Activated naive CD4-positive, alpha-beta T cell treated with anti-CD3 and anti-CD28 coated beads for 36 hours (primary cell): ENCODE measurements at regions of chr1 and their contacts with region 1.

Region 1: DNA sequence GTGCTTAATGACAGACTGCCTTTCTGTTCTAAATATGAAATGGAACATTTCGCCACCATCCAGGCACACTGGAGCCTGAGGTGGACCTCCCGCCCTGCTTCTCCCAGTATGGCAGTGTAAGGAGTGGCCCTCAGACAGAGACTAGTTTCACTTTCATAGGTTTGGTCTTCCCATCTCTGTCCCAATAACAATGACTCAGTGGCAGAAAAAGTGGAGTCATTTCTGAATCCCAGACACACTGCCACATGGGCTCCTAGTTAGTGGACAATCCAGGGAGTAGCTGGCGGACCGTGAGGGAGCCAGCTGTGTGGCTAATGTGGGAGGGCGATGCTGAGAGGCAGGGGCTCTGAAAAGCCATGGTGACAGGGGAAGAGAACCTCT is 95.6 kb upstream of the TSPAN2 start:
- DNase-seq: no peak
- H3K4me3 Mint-ChIP-seq: no peak overlapping the region
- H3K27ac Mint-ChIP-seq: peak overlapping the region; percentile 22
- H3K4me1 Mint-ChIP-seq: peaks cover 6% of the 10 kb centered on the region
- H3K27me3 Mint-ChIP-seq: peaks cover 10% of the 10 kb centered on the region

Region 2: GRCh38 chr1:114524935-114525334 is 660.0 kb before region 1 on chr1:
- CTCF ChIA-PET with region 1: no interaction called
- intact Hi-C with region 1: no loop called
- DNase-seq: no peak
- H3K4me3 Mint-ChIP-seq: no peak overlapping the region
- H3K27ac Mint-ChIP-seq: no peak overlapping the region
- H3K4me1 Mint-ChIP-seq: no peaks in the 10 kb centered on the region
- H3K27me3 Mint-ChIP-seq: peaks cover 2% of the 10 kb centered on the region

Region 3: GRCh38 chr1:115164940-115165705 is 19.8 kb before region 1 on chr1:
- CTCF ChIA-PET with region 1: interaction called, 3 read pairs
- intact Hi-C with region 1: loop called (anchors 1 kb)
- DNase-seq: no peak
- H3K4me3 Mint-ChIP-seq: no peak overlapping the region
- H3K27ac Mint-ChIP-seq: no peak overlapping the region
- H3K4me1 Mint-ChIP-seq: peaks cover 3% of the 10 kb centered on the region
- H3K27me3 Mint-ChIP-seq: peaks cover 22% of the 10 kb centered on the region